ENCODE measurements at regions of chr5 and their contacts with region 1.

Region 1: DNA sequence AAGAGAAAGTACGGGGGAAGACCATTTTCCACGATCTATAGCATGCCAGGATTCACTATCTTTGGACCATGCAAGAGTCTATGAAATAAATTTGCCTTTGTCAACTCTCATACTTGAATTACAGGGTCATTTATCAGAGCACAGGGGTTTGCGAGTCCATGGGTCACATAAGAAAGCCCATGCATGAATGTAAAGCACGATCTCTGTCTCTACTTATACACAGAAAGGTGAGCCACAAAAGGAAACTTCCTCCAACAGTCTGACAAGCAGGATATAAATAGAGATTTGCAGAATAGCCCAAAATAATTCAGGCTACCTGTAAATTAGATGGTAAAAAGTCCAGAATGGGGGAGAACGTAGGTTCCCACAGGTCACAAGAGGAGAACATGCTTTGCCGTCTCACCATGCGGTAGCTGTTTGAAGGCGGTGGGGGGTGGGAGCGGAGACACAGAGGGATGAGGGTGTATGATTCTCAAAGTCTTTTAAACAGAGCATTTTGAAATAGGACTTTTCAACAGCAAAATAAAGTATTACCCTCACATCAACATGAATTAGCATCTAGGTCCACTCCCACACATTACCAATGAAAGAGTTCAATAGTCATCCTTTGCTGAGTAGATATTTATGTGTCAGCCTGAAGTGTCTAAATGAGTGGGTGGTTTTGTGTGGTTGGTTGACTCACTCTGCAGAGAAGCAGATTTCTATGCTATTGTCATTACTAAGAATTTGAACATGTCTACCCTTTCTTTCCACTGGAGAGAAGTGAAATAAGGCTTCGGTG is 279.7 kb downstream of the EBF1 start:
- DNase-seq: no peak
- H3K4me3 ChIP-seq: no peak overlapping the region
- H3K27me3 ChIP-seq: no peaks in the 10 kb centered on the region
- CTCF ChIP-seq: no peak

Region 2: DNA sequence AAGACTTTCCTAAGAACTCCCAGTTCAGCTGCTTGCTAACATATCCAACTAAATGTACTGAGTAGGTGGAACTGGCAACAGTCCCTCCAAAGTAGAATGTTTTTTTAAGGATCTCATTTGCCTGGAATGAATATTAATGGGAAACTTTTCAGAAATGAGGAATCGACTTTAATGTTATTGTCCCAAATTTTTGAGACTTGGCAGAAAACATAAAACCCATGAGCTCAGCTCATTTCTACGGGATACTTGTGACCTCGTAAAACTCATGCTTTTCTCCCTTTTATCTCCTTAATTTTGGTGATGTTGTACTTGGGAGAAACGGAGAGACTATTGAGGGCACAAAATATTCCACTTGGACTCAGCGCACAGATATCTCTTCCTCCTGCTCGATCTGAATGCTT is 17.1 kb before region 1 on chr5:
- CTCF ChIA-PET with region 1: interaction called, 3 read pairs
- POLR2A ChIA-PET with region 1: interaction called, 12 read pairs
- DNase-seq: peak; percentile 63
- H3K4me3 ChIP-seq: no peak overlapping the region
- H3K27me3 ChIP-seq: no peaks in the 10 kb centered on the region
- CTCF ChIP-seq: no peak

Measured in BJ (cell line).